H1 (cell line): ENCODE measurements at regions of chr19 and their contacts with region 1.

Region 1: DNA sequence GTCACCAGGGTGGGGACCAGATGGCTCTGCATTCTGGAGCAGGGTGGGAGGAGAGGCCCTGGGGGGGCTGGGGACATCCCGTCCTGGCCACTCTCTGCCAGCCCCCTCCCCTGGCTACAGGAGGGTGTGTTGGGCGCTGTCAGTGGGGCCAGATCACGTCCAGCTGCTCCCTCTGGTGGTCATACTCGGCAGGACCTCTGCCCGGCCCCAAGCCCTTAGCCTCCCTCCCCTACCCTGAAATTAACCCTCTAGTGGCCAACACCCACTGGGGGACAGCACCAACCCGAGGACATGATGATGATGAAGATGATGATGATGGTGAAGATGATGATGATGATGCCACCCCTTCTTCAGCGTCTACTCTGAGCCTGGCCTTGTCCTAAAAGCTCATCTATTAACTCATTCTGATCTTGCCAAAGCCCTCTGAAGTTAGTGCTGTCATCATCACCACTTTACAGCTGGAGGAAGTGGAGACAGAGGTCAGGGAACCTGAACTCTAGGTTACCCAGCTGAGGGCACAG is 590 bp upstream of the LGI4 start:
- DNase-seq: peak in 1 of 2 experiments; percentile 96
- H3K4me3 ChIP-seq: peak overlapping the region in 1 of 4 experiments; percentile 44; a peak in 2 of 8 replicates
- H3K27ac ChIP-seq: no peak overlapping the region
- H3K4me1 ChIP-seq: peaks cover 3 to 19% (median 13%) of the 10 kb centered on the region in 4 experiments; a peak in 6 of 7 replicates
- H3K27me3 ChIP-seq: peaks cover 0 to 3% (median under 1%) of the 10 kb centered on the region in 4 experiments; a peak in 3 of 7 replicates
- CTCF ChIP-seq: peak; percentile 91 to 94 (median 94)
- EP300 ChIP-seq: no peak
- POLR2A ChIP-seq: no peak
- RAD21 ChIP-seq: peak; percentile 72 to 83

Region 2: GRCh38 chr19:35023428-35023827 is 112.0 kb before region 1 on chr19:
- CTCF ChIA-PET with region 1: no interaction called
- POLR2A ChIA-PET with region 1: no interaction called
- DNase-seq: no peak
- H3K4me3 ChIP-seq: no peak overlapping the region
- H3K27ac ChIP-seq: no peak overlapping the region
- H3K4me1 ChIP-seq: no peaks in the 10 kb centered on the region
- H3K27me3 ChIP-seq: no peaks in the 10 kb centered on the region
- CTCF ChIP-seq: no peak
- EP300 ChIP-seq: no peak
- POLR2A ChIP-seq: no peak
- RAD21 ChIP-seq: no peak

Region 3: GRCh38 chr19:35044317-35045117 is 90.9 kb before region 1 on chr19:
- CTCF ChIA-PET with region 1: interaction called, 36 read pairs
- POLR2A ChIA-PET with region 1: interaction called, 3 read pairs
- DNase-seq: peak in 1 of 2 experiments; percentile 95
- H3K4me3 ChIP-seq: no peak overlapping the region
- H3K27ac ChIP-seq: no peak overlapping the region
- H3K4me1 ChIP-seq: peaks cover 5 to 37% (median 23%) of the 10 kb centered on the region in 4 experiments
- H3K27me3 ChIP-seq: no peaks in the 10 kb centered on the region
- CTCF ChIP-seq: peak; percentile 78 to 99 (median 84)
- EP300 ChIP-seq: no peak
- POLR2A ChIP-seq: no peak
- RAD21 ChIP-seq: peak; percentile 66 to 72

Region 4: GRCh38 chr19:35066691-35067563 is 68.5 kb before region 1 on chr19:
- CTCF ChIA-PET with region 1: interaction called, 73 read pairs
- POLR2A ChIA-PET with region 1: interaction called, 6 read pairs
- DNase-seq: peak; percentile 96 to 99
- H3K4me3 ChIP-seq: peak overlapping the region in 2 of 4 experiments; percentile 21 to 44; a peak in 3 of 8 replicates
- H3K27ac ChIP-seq: peak overlapping the region; percentile 54; the same call in 1 of the 2 replicates
- H3K4me1 ChIP-seq: peaks cover 3 to 13% (median 11%) of the 10 kb centered on the region in 4 experiments
- H3K27me3 ChIP-seq: peaks cover 0 to 2% (median 0%) of the 10 kb centered on the region in 4 experiments; a peak in 1 of 7 replicates
- CTCF ChIP-seq: peak; percentile 88 to 98 (median 96)
- EP300 ChIP-seq: no peak
- POLR2A ChIP-seq: 0 out of 3 replicates have a peak, but pooled peaks of 1 of the 2 experiments have one; percentile 25
- RAD21 ChIP-seq: peak; percentile 93 to 97

Region 5: GRCh38 chr19:35098413-35099049 is 36.9 kb before region 1 on chr19:
- CTCF ChIA-PET with region 1: interaction called, 30 read pairs
- POLR2A ChIA-PET with region 1: interaction called, 4 read pairs
- DNase-seq: no peak
- H3K4me3 ChIP-seq: no peak overlapping the region
- H3K27ac ChIP-seq: no peak overlapping the region
- H3K4me1 ChIP-seq: peaks cover 0 to 3% (median 1%) of the 10 kb centered on the region in 4 experiments; a peak in 3 of 7 replicates
- H3K27me3 ChIP-seq: no peaks in the 10 kb centered on the region
- CTCF ChIP-seq: no peak
- EP300 ChIP-seq: no peak
- POLR2A ChIP-seq: no peak
- RAD21 ChIP-seq: no peak

Region 6: DNA sequence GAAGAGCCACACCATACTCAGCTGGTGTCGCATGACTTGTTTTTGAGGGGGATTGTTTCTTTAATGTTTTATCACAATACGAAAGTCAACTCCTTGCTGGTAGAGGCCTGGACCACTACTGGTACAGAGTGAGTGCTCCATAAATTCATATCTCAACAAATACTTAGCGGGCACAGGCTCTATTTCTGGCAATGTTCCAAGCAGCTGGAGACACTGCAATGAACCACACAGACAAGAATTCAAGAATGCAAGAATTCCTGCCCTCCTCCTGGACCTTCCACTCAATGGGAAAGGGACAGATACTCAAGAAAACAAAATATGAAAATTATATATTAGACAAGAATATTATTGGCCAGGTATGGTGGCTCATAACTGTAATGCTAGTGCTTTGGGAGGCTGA is 14.0 kb after region 1 on chr19:
- CTCF ChIA-PET with region 1: interaction called, 17 read pairs
- POLR2A ChIA-PET with region 1: interaction called, 5 read pairs
- DNase-seq: no peak
- H3K4me3 ChIP-seq: no peak overlapping the region
- H3K27ac ChIP-seq: no peak overlapping the region
- H3K4me1 ChIP-seq: peaks cover 4 to 25% (median 18%) of the 10 kb centered on the region in 4 experiments
- H3K27me3 ChIP-seq: peaks cover 0 to 5% (median 4%) of the 10 kb centered on the region in 4 experiments; a peak in 4 of 7 replicates
- CTCF ChIP-seq: no peak
- EP300 ChIP-seq: no peak
- POLR2A ChIP-seq: no peak
- RAD21 ChIP-seq: no peak

Region 7: DNA sequence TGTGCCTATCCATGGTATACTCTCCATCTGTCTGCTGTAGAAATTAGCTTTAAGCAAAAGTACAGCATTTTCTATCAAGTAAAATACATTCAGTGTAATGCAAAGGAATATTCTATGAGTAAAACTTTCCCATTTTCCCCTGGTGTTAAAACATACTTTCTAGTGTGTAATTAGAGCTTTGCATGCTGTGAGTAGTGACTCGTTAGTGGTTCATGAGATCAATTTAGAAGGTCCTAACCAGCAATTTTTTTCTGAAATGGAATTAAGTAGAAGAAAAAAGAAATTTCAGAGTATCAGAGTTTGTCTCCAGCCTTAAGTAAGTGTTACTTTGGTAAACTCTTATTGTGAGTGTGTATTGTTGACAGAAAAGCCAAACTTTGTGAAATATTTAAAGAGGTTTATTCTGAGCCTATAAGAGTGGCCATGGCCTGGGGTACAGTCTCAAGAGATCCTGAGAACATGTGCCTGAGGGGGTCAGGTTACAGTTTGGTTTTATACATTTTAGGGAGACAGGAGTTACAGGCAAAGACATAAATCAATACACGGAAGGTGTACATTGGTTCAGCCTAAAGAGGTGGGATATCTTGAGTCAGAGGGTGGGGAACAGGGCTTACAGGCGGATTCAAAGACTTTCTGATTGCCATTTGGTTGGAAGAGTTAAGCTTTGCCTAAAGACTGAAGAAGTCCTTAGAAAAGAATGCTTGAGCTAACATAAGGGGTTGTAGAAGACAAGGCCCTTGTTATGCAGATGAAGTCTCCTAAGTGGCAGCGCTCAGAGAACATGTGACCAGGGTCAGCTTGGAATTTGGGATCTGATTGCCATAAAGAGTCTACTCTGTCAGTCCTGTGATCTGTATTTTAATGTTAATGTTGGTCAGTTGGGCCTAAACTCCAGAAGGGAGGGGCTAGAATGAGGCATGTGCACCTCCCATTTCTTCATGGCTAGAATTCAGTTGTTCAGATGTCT is 67.6 kb after region 1 on chr19:
- CTCF ChIA-PET with region 1: interaction called, 13 read pairs
- POLR2A ChIA-PET with region 1: interaction called, 3 read pairs
- DNase-seq: peak in 1 of 2 experiments; percentile 75
- H3K4me3 ChIP-seq: peak overlapping the region in 1 of 4 experiments; percentile 40; a peak in 1 of 8 replicates
- H3K27ac ChIP-seq: peak overlapping the region; percentile 74
- H3K4me1 ChIP-seq: peaks cover 9 to 32% (median 16%) of the 10 kb centered on the region in 4 experiments
- H3K27me3 ChIP-seq: peaks cover 0 to 2% (median 0%) of the 10 kb centered on the region in 4 experiments; a peak in 1 of 7 replicates
- CTCF ChIP-seq: no peak
- EP300 ChIP-seq: no peak
- POLR2A ChIP-seq: no peak
- RAD21 ChIP-seq: no peak